AG04450 (cell line): ENCODE measurements at regions of chr10 and their contacts with region 1.

Region 1: DNA sequence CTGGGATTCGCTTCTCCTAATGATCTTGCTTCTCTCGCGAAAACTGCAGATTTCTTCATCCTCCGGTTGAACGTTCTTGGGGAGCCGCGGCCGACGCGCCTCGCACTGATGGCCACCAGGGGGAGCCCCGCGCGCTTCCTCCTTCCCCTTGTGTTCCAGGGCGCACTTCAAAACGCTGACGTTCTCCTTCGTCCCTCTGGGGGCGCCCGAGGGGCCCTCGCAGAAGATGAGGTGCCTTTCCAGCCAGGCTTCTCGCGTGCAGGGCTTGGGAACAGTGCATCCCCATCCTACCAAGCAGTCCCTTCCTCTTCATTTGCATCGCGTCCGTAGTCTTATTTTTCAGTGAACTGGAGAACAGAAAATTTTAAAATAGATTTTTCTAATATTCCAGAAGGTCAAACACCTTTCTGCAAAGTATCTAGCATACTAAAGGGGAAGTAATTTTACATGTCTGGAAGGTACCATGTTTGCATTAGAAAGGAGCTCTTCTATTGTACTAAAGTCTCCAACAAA is 22.5 kb downstream of the GSTO2 start:
- DNase-seq: no peak
- H3K4me3 ChIP-seq: no peak overlapping the region
- H3K27ac ChIP-seq: no peak overlapping the region
- H3K27me3 ChIP-seq: no peaks in the 10 kb centered on the region
- CTCF ChIP-seq: peak; percentile 100

Region 2: GRCh38 chr10:104121520-104122224 is 169.8 kb before region 1 on chr10 and contains the start of gene SFR1:
- CTCF ChIA-PET with region 1: interaction called, 11 read pairs
- POLR2A ChIA-PET with region 1: no interaction called
- DNase-seq: peak; percentile 94
- H3K4me3 ChIP-seq: peak within 1 kb of the TSS; percentile 90
- H3K27ac ChIP-seq: peak within 1 kb of the TSS; percentile 99
- H3K27me3 ChIP-seq: no peaks in the 10 kb centered on the region
- CTCF ChIP-seq: peak; percentile 62
- polyA plus RNA-seq, gene SFR1: 2.6 and 3.9 TPM in 2 replicates

Region 3: DNA sequence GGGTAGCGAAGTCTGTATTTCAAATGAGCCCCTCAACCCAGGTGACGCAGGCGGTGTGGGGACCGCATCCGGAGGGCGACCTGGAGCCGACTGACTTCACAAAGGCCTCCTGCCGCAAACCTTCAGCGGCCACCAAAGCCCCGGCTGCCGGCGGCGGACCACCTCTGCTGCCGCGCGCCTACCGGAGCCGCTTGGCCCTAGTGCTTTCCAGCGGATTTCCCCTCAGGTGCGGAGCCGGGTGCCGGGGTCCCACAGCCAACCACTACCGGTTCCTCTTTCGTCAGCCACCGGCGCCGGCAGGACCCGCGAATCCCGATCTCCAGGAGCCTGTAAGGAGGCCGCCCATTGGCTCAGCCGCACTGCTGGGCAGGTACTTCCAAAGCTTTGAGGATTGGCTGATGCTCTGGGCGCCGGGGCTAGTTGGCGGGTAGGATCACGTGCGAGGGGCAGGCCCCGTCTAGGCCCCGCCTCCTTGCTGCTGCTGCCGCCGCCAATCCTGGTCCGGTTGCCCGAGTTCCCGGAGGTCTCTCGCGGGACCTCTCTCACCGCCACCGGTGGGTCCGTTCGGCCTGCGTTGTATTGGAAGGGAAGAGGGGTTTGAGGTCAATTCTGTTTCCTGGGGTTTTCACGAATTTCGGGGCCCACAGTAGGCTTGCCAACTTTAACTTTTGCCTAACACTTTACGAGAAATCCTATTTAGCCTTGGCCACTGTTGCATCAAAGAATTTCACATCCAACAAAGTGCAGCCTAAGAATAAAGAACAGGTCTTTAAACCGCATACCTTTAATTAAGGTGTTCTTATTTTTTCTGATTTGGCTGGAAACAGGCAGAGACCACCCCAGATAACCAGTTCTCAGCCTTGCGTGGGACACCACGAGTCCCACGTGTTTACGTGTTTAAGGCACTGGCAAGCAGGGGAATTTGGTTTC is 22.5 kb before region 1 on chr10 and contains the start of gene GSTO2:
- CTCF ChIA-PET with region 1: interaction called, 292 read pairs
- POLR2A ChIA-PET with region 1: no interaction called
- DNase-seq: peak; percentile 95
- H3K4me3 ChIP-seq: peak within 1 kb of the TSS; percentile 77
- H3K27ac ChIP-seq: peak within 1 kb of the TSS; percentile 80
- H3K27me3 ChIP-seq: no peaks in the 10 kb centered on the region
- CTCF ChIP-seq: no peak
- polyA plus RNA-seq, gene GSTO2: 1.7 TPM in 2 replicates

Region 4: DNA sequence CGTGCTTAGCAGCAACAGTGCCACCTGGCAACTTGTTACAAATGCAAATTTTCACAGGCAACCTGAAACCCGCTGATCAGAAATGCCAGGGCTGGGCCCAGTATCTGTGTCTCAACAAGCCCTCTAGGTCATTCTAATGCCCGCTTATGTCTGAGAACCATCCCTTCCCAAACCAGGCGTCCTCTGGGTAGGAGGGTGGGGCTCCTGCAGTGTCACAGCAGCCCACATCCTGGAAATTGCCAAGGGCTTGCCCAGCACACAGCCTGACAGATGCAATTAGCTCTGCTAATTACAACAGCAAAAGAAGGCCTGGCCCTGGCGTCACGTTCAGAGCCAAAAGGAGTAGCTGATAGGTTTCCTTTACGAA is 30.9 kb after region 1 on chr10:
- CTCF ChIA-PET with region 1: interaction called, 49 read pairs
- POLR2A ChIA-PET with region 1: no interaction called
- DNase-seq: no peak
- H3K4me3 ChIP-seq: no peak overlapping the region
- H3K27ac ChIP-seq: no peak overlapping the region
- H3K27me3 ChIP-seq: no peaks in the 10 kb centered on the region
- CTCF ChIP-seq: no peak

Region 5: DNA sequence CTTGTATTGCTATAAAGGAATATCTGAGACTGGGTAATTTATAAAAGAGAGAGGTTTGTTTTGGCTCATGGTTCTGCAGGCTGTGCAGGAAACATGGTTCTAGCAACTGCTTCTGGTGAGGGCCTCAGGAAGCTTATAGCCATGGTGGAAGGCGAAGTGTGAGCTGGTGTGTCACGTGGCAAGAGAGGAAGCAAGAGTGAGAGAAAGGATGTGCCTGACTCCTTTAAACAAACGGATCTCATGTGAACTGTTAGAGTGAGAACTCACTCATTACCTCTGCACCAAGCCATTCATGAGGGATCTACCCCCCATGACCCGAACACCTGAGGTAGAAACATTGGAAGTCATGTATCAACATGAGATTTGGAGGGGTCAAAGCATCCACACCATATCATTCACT is 54.4 kb after region 1 on chr10:
- CTCF ChIA-PET with region 1: interaction called, 379 read pairs
- POLR2A ChIA-PET with region 1: no interaction called
- DNase-seq: no peak
- H3K4me3 ChIP-seq: no peak overlapping the region
- H3K27ac ChIP-seq: no peak overlapping the region
- H3K27me3 ChIP-seq: no peaks in the 10 kb centered on the region
- CTCF ChIP-seq: no peak

Region 6: DNA sequence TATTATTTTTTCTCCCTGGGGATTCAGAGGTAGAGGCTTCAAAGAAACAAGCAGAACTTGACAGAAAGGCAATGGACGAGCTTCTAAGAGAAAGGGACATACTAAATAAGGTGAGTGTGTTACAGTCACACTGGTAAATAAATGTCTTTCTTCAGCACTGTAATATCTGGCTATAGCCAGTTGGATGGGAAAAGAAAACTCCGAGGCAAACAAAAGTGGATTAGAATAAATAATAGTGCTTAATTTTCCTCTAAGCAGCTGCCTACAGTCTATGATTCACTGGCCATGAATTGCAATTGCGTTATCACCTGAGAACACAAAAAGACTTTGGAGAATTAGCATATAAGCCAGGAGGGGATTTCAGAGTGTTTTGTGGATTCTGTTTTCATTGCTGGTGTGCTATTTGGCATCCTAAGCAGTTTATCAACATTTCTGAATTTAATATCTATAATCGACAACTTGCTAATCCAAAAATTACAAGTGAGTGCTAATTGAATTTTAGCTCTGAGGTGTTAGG is 85.3 kb after region 1 on chr10:
- CTCF ChIA-PET with region 1: interaction called, 15 read pairs
- POLR2A ChIA-PET with region 1: no interaction called
- DNase-seq: no peak
- H3K4me3 ChIP-seq: no peak overlapping the region
- H3K27ac ChIP-seq: no peak overlapping the region
- H3K27me3 ChIP-seq: no peaks in the 10 kb centered on the region
- CTCF ChIP-seq: no peak